ENCODE measurements at regions of chr12 and their contacts with region 1.

Region 1: GRCh38 chr12:110600254-110600653 is 13.7 kb upstream of the TCTN1 start:
- DNase-seq: peak; percentile 68
- H3K4me3 Mint-ChIP-seq: no peak overlapping the region
- H3K27ac Mint-ChIP-seq: no peak overlapping the region
- H3K4me1 Mint-ChIP-seq: peaks cover 7% of the 10 kb centered on the region
- H3K27me3 Mint-ChIP-seq: no peaks in the 10 kb centered on the region
- CTCF ChIP-seq: peak; percentile 66

Region 2: GRCh38 chr12:110361216-110361615 is 239.0 kb before region 1 on chr12:
- CTCF ChIA-PET with region 1: no interaction called
- POLR2A ChIA-PET with region 1: no interaction called
- intact Hi-C with region 1: loop called (anchors 5 kb)
- DNase-seq: no peak
- H3K4me3 Mint-ChIP-seq: no peak overlapping the region
- H3K27ac Mint-ChIP-seq: no peak overlapping the region
- H3K4me1 Mint-ChIP-seq: no peaks in the 10 kb centered on the region
- H3K27me3 Mint-ChIP-seq: no peaks in the 10 kb centered on the region
- CTCF ChIP-seq: no peak

Region 3: DNA sequence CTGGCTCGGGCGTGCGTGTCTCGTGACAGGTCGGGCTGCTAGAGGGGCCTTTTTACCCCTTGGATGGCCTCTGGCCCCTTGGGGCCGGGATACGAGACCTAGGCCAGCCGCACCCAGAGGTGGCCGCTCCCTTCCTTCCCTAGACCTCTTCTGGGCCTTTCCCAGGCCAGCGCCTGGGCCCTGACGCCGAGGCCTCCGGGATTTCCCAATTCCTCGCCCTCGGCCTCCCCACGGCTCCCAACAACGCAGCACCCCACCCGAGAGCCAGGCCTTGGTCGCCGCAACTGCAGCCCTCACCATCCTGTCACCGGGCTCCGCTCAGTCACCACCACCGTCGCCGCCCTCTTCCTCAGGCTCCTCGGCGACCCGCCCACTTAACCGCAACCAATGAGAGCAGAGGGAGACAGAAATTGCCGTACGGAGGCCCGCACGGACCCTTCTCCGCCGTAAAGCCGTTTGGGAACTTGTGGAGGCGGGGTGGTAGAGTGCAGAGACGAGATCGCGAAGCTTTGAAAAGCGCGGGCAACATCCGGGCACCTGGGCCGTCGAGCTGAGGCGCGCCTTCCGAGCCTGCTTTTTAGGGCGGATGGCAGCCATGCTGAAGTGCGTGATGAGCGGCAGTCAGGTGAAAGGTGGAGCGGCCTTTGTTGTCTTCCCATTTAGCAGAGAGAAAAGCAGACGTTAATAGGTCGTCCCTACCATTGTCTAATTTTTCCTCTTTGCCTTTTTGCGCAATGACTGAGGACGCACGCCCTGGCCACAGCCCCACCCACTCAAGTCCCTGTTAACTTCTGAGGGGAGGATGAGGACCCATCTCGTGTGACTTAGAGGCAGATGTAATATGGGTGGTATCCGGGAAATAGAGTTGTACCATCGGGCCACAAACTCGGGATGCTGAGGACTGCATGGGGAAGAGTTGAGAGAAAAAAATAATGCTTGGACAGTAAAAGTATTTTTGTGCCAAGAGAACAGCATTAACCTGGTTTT is 98.2 kb before region 1 on chr12 and contains the starts of genes RAD9B and VPS29:
- CTCF ChIA-PET with region 1: interaction called, 239 read pairs
- POLR2A ChIA-PET with region 1: interaction called, 10 read pairs
- intact Hi-C with region 1: no loop called
- DNase-seq: peak; percentile 98
- H3K4me3 Mint-ChIP-seq: peak within 1 kb of the TSS; percentile 92
- H3K27ac Mint-ChIP-seq: peak within 1 kb of the TSS; percentile 96
- H3K4me1 Mint-ChIP-seq: peaks cover 14% of the 10 kb centered on the region
- H3K27me3 Mint-ChIP-seq: no peaks in the 10 kb centered on the region
- CTCF ChIP-seq: no peak
- total RNA-seq, gene RAD9B: 1.0 and 1.5 TPM in 2 replicates
- total RNA-seq, gene VPS29: 125 and 131 TPM in 2 replicates

Region 4: GRCh38 chr12:110537605-110538409 is 62.4 kb before region 1 on chr12:
- CTCF ChIA-PET with region 1: interaction called, 30 read pairs
- POLR2A ChIA-PET with region 1: interaction called, 7 read pairs
- intact Hi-C with region 1: no loop called
- DNase-seq: peak; percentile 97
- H3K4me3 Mint-ChIP-seq: peak overlapping the region; percentile 47
- H3K27ac Mint-ChIP-seq: peak overlapping the region; percentile 69
- H3K4me1 Mint-ChIP-seq: peaks cover 40% of the 10 kb centered on the region
- H3K27me3 Mint-ChIP-seq: no peaks in the 10 kb centered on the region
- CTCF ChIP-seq: no peak

Region 5: DNA sequence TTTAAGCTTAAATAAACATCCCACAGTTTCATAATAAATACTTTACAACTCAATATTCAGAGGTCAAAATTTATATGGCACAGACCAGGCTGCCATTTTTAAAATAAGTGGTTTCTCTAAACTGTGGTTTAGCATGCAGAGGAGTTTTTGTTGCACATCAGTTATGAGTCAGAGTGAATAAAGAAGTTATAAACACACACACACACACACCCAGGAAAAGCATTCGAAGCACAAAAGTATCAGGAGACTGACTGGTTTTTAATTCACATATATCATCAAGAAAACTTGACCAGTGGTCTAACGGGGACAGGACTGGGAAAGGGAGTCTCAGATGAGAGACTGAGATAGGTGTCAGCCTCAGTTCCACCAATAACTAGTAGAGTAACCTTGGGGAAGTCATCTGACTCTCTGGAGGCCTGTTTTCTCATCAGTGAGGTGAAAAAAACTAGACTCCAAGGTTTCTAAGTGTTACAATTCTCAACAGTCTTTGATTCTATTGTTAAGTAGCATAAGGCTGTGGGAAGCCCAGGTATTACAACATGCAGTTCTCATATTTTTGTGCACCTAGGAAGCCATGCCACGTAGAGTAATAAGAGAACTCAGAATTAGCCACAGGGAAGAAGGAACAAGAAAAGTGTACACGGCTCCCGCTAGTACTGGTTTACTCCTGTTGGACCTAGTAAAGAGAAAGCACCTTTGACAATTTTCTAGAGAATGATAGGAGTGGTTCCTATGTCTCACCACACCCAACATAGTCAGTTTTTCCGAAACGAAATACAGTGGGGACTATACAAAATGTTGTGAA is 22.3 kb before region 1 on chr12:
- CTCF ChIA-PET with region 1: interaction called, 10 read pairs
- POLR2A ChIA-PET with region 1: interaction called, 5 read pairs
- intact Hi-C with region 1: no loop called
- DNase-seq: peak; percentile 93
- H3K4me3 Mint-ChIP-seq: peak overlapping the region; percentile 96
- H3K27ac Mint-ChIP-seq: peak overlapping the region; percentile 97
- H3K4me1 Mint-ChIP-seq: peaks cover 26% of the 10 kb centered on the region
- H3K27me3 Mint-ChIP-seq: no peaks in the 10 kb centered on the region
- CTCF ChIP-seq: no peak

Region 6: DNA sequence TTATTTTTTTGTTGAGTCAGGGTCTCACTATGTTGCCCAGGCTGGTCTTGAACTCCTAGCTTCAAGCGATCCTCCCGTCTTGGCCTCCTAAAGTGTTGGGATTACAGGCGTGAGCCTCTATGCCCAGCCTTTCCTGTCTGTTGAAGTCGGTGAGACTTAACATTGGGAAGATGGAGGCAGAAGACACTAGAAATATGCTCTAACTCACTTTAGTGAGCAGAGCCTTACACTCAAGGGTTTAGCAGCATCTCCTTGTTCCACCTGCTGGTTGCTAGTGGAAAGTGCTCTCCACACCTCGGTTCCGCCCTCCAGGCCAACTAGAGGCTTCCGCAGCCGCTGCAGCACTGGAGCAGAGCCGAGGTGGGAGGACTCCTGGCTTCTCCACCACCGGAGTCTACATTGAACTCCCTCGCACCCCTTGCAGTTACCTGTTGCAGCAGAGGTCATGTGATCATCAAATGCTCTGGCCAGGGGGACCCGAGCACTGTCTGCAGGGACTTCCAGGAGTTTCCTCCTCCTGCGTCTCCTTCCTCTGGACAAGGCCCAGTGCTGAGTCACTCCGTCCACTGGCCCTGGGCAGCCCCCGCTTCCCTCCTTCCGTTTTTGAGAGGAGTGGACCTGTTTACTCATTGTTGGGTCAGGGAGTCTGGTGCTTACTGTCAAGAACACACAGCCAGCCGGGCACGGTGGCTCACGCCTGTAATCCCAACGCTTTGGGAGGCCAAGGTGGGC is 98.1 kb after region 1 on chr12:
- CTCF ChIA-PET with region 1: no interaction called
- POLR2A ChIA-PET with region 1: no interaction called
- intact Hi-C with region 1: loop called (anchors 1 kb)
- DNase-seq: peak; percentile 91
- H3K4me3 Mint-ChIP-seq: no peak overlapping the region
- H3K27ac Mint-ChIP-seq: no peak overlapping the region
- H3K4me1 Mint-ChIP-seq: no peaks in the 10 kb centered on the region
- H3K27me3 Mint-ChIP-seq: no peaks in the 10 kb centered on the region
- CTCF ChIP-seq: peak; percentile 55

Measured in MCF 10A (cell line).